Naive thymus-derived CD4-positive, alpha-beta T cell (primary cell): ENCODE measurements at regions of chr4 and their contacts with region 1.

Region 1: DNA sequence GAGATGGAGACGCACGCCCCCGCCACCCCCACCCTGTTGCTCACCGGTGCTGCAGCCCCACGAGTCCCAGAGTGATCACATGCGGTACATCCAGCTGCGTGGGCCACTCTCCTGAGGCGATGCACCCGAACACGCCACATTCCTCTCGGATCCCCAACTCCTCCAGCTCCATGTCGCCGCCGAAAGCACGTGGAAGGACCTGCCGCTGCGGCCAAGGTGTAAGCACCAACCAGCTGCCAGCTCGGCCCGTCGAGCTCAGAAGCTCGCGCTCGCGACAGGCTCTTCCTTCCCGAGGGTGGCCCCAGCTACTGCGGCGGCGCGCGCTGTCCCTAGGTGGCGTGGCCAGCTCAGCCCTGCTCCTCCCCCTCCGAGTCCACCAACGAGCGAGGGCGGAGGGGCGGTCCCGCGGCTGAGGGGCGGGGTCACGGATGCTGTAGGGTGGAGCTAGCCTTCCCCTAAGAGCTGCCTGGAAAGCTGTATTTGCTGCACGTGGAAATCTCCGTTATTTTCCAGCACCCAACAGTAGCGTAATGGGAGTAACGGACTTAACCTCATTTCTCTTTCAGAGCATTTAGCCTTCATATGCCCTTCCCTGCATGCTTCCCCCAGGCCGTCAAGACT is at the start of gene PPAT:
- DNase-seq: peak; percentile 97 to 100 (median 99)
- ATAC-seq: peak; percentile 91
- H3K4me3 ChIP-seq: peak within 1 kb of the TSS; percentile 93
- H3K4me3 Mint-ChIP-seq: peak within 1 kb of the TSS; percentile 81 to 99 (median 94)
- H3K27ac ChIP-seq: peak within 1 kb of the TSS; percentile 59
- H3K27ac Mint-ChIP-seq: peak within 1 kb of the TSS; percentile 78 to 98 (median 91)
- H3K4me1 ChIP-seq: peaks cover 12 to 15% of the 10 kb centered on the region in 2 donors
- H3K4me1 Mint-ChIP-seq: peaks cover 33 to 63% (median 47%) of the 10 kb centered on the region in 7 donors
- H3K27me3 ChIP-seq: no peaks in the 10 kb centered on the region
- H3K27me3 Mint-ChIP-seq: no peaks in the 10 kb centered on the region
- total RNA-seq, gene PPAT: 7.7 to 30.7 (median 15.3) TPM

Region 2: GRCh38 chr4:55395529-55396307 is 1039.7 kb before region 1 on chr4 and contains the start of gene TMEM165:
- CTCF ChIA-PET with region 1: no interaction called
- POLR2A ChIA-PET with region 1: interaction called, 4 read pairs
- intact Hi-C with region 1: loop called (anchors 1 to 5 kb)
- DNase-seq: peak; percentile 77 to 92 (median 87)
- ATAC-seq: peak; percentile 94
- H3K4me3 ChIP-seq: peak within 1 kb of the TSS; percentile 88
- H3K4me3 Mint-ChIP-seq: peak within 1 kb of the TSS; percentile 94 to 99 (median 96)
- H3K27ac ChIP-seq: peak within 1 kb of the TSS; percentile 89
- H3K27ac Mint-ChIP-seq: peak within 1 kb of the TSS; percentile 89 to 99 (median 96)
- H3K4me1 ChIP-seq: peaks cover 27 to 31% of the 10 kb centered on the region in 2 donors
- H3K4me1 Mint-ChIP-seq: peaks cover 29 to 49% (median 39%) of the 10 kb centered on the region in 7 donors
- H3K27me3 ChIP-seq: no peaks in the 10 kb centered on the region
- H3K27me3 Mint-ChIP-seq: no peaks in the 10 kb centered on the region
- total RNA-seq, gene TMEM165: 53.1 to 80.9 (median 58.9) TPM

Region 3: GRCh38 chr4:56387023-56388001 is 48.1 kb before region 1 on chr4 and contains the start of gene AASDH:
- CTCF ChIA-PET with region 1: interaction called, 5 read pairs
- POLR2A ChIA-PET with region 1: interaction called, 77 read pairs
- intact Hi-C with region 1: loop called (anchors 1 kb)
- DNase-seq: peak; percentile 92 to 98 (median 94)
- ATAC-seq: peak; percentile 95
- H3K4me3 ChIP-seq: peak within 1 kb of the TSS; percentile 94
- H3K4me3 Mint-ChIP-seq: peak within 1 kb of the TSS; percentile 87 to 99 (median 96)
- H3K27ac ChIP-seq: peak within 1 kb of the TSS; percentile 92
- H3K27ac Mint-ChIP-seq: peak within 1 kb of the TSS; percentile 97 to 100 (median 98)
- H3K4me1 ChIP-seq: peaks cover 15 to 18% of the 10 kb centered on the region in 2 donors
- H3K4me1 Mint-ChIP-seq: peaks cover 19 to 60% (median 47%) of the 10 kb centered on the region in 7 donors
- H3K27me3 ChIP-seq: no peaks in the 10 kb centered on the region
- H3K27me3 Mint-ChIP-seq: no peaks in the 10 kb centered on the region
- total RNA-seq, gene AASDH: 10.2 to 24.7 (median 15.8) TPM

Region 4: DNA sequence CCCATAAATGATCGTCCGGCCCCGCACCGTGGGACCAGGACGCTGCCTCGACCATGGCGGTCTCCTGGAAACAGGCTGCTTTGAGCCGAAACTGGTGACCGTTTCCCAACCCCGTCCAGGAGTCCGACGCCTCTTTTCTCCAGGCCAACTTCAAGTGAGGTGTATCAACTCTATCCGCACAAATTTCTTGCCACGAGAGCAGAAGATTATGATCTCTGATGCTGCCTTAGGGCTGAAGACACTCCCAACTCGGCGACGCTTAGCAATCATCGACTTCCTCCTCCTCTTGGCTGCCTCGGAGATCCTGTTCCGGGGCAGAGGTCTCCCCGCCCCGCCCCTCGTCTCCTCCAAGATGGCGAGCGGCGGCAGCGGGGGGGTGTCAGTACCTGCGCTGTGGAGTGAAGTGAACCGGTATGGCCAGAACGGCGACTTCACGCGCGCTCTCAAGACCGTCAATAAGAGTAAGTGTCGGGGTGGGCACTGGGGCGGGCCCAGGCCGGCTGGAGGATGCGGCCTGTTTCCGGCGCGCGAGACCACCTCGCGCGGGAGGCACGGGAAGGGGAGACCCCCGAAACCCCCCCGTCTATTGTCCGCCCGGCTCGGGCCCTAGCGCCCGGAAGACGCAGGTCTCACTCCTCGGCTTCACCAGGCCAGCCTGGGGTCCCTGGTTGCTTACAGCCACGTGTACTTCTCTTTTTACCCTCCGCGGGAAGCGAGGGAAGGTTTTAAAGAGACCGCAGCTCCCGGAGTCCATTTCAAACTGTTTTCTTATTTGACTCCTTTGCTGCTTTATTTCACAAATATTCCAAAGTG is 32.1 kb after region 1 on chr4 and contains the start of gene SRP72:
- CTCF ChIA-PET with region 1: interaction called, 3 read pairs
- POLR2A ChIA-PET with region 1: interaction called, 56 read pairs
- intact Hi-C with region 1: loop called (anchors 1 kb)
- DNase-seq: peak; percentile 80 to 95 (median 88)
- ATAC-seq: peak; percentile 98
- H3K4me3 ChIP-seq: peak within 1 kb of the TSS; percentile 98
- H3K4me3 Mint-ChIP-seq: peak within 1 kb of the TSS; percentile 93 to 100 (median 96)
- H3K27ac ChIP-seq: peak within 1 kb of the TSS; percentile 90
- H3K27ac Mint-ChIP-seq: peak within 1 kb of the TSS; percentile 94 to 99 (median 96)
- H3K4me1 ChIP-seq: peaks cover 25 to 29% of the 10 kb centered on the region in 2 donors
- H3K4me1 Mint-ChIP-seq: peaks cover 46 to 68% (median 62%) of the 10 kb centered on the region in 7 donors
- H3K27me3 ChIP-seq: no peaks in the 10 kb centered on the region
- H3K27me3 Mint-ChIP-seq: no peaks in the 10 kb centered on the region
- total RNA-seq, gene SRP72: 98.4 to 145 (median 109) TPM

Region 5: GRCh38 chr4:56544573-56545131 is 109.2 kb after region 1 on chr4:
- CTCF ChIA-PET with region 1: interaction called, 5 read pairs
- POLR2A ChIA-PET with region 1: interaction called, 4 read pairs
- intact Hi-C with region 1: loop called in 1 of 2 experiments (anchors 1 kb)
- DNase-seq: peak; percentile 72 to 93 (median 84)
- ATAC-seq: peak; percentile 100
- H3K4me3 ChIP-seq: peak overlapping the region; percentile 68
- H3K4me3 Mint-ChIP-seq: peak overlapping the region; percentile 18 to 81 (median 74)
- H3K27ac ChIP-seq: no peak overlapping the region
- H3K27ac Mint-ChIP-seq: peak overlapping the region in 7 of 9 donors; percentile 25 to 79 (median 63)
- H3K4me1 ChIP-seq: peaks cover 0 to 4% of the 10 kb centered on the region in 2 donors
- H3K4me1 Mint-ChIP-seq: peaks cover 8 to 22% (median 21%) of the 10 kb centered on the region in 7 donors
- H3K27me3 ChIP-seq: no peaks in the 10 kb centered on the region
- H3K27me3 Mint-ChIP-seq: peaks cover 0 to 25% (median 7%) of the 10 kb centered on the region in 5 donors

Region 6: DNA sequence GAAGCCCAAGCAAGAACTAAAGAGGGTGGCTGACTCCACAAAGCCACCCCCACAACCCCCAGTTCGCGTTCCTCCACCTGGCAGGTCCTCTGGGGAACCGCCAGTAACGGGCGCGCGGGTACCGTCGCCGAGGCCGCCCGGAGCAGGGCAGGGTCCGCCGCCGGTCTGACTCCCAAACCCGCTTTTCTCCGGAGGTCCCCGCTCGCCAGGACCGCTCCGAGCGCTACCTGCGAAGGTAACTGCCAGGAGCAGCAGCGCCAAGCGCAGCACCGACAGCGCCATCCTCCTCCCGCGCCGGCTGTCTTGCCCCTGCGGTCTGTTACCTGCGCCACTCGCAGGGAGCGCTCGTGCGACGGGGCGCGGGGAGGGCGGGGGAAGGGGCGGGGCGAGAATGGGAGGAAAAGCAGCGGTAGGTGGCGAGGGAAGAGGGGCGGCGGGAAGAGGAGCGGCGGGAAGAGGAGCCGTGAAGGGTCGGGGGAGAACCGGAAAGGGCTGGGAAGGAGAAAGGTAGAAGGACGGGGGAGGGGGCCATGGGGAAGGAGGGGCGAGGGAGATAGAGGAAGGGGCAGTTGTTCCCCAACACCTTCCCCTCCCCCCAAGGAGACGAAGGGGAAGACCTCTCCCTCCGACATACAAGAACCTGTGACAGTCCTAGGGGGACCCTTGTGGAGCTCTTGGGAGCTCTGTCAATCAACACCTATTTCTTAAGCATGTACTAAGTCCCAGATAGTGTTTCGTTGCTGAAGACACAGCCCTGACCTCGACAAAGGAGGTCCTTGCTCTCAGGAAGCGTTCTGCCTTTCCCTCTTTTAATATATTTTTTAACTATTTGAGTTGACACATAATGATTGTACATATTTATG is 386.2 kb after region 1 on chr4 and contains the start of gene SPINK2:
- CTCF ChIA-PET with region 1: no interaction called
- POLR2A ChIA-PET with region 1: interaction called, 4 read pairs
- intact Hi-C with region 1: loop called in 1 of 2 experiments (anchors 1 kb)
- DNase-seq: peak; percentile 49 to 76 (median 68)
- ATAC-seq: peak; percentile 95
- H3K4me3 ChIP-seq: peak within 1 kb of the TSS; percentile 68
- H3K4me3 Mint-ChIP-seq: peak within 1 kb of the TSS; percentile 44 to 86 (median 80)
- H3K27ac ChIP-seq: no peak within 1 kb of the TSS
- H3K27ac Mint-ChIP-seq: peak within 1 kb of the TSS in 6 of 9 donors; percentile 57 to 79 (median 71)
- H3K4me1 ChIP-seq: peaks cover 12 to 17% of the 10 kb centered on the region in 2 donors
- H3K4me1 Mint-ChIP-seq: peaks cover 16 to 41% (median 35%) of the 10 kb centered on the region in 7 donors
- H3K27me3 ChIP-seq: no peaks in the 10 kb centered on the region
- H3K27me3 Mint-ChIP-seq: peaks cover 0 to 56% (median 0%) of the 10 kb centered on the region in 5 donors
- total RNA-seq, gene SPINK2: 0.99 to 5.8 (median 4.4) TPM